HEK293 (cell line): ENCODE measurements at regions of chr7 and their contacts with region 1.

Region 1: DNA sequence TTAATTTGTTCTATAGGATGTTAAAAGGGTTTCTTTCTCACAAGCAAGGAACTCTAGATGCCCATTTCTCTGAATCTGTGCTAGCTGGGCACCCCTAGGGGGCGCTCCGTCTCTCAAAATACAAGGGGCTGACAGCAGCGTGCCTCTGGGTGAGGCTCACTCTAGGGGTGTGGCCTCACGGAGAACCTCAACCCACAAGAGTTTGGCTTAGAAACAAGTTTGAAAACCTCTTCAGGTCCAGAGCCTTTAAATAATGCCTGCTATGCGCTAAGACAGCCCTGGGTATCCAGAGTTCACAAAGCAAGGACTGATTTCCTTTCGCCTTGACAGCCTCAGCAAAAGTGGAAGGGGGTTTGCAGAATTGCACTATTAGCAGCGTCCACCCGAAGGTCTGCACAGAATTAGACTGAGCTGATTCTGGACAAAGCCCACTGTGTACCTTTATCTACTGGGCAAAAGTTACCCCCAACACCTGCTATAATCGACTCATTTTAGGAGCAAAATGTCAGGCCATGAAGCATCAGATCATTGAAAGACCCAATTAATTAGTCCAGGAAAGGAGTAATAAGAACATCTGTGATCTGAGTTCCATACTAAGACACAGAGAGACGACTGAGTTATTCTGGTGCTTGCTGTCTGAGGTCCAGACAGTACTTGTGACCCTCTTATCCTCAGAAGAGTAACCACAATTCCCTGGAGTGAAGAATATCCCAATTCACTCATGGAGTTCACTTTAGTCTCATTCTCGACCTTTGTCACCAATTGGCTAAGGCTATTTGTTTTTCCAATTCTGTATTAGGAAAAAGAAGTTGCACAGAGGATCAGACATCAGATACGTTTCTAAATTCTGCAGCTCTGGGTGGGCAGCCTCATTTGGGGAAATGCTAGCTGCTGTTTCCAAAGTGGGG is 574 bp upstream of the CPED1 start:
- H3K4me3 ChIP-seq: peak overlapping the region; percentile 38
- H3K27ac ChIP-seq: peak overlapping the region; percentile 29; the same call in 1 of the 2 replicates
- H3K4me1 ChIP-seq: peaks cover 3% of the 10 kb centered on the region; the same call in 1 of the 2 replicates
- CTCF ChIP-seq: peak; percentile 62

Region 2: DNA sequence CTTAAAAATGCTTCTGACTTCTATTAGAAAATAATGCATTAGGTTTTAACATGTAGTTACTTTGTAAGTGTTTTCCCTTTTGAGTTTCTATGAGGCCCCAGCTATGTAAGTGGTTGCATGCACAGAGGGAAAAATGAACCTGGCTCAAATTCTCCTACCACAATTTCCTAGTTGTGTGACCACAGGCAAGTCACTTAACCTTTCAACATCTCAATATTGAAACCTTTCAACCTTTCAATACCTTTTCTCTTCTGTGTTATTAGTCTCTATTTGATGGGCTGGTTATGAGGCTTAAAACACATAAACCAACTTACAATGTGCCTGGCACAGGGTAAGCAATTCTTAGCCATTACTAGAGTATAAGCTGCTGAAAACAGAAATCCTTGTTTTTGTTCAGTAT is 511.9 kb before region 1 on chr7:
- CTCF ChIA-PET with region 1: no interaction called
- POLR2A ChIA-PET with region 1: no interaction called
- H3K4me3 ChIP-seq: no peak overlapping the region
- H3K27ac ChIP-seq: no peak overlapping the region
- H3K4me1 ChIP-seq: no peaks in the 10 kb centered on the region
- CTCF ChIP-seq: no peak

Region 3: DNA sequence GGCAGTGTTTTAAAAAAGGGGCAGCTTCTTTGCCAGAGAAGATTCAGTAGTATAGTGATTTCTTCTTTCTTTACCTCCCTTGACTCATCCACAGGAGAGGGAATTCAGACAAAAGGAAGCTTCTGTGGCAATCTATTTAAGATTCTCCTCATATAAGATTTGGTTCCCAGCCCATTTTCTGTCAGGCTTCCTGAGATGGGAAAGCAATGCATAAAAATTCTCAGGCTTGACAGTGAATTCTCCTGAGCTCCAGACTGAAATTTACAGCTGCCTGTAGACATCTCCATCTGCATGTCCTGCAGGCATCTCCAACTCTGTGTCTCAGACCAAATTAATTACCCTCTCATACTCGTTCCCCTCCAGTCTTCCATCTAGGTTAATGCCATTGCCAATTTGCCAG is 202.8 kb before region 1 on chr7:
- CTCF ChIA-PET with region 1: no interaction called
- POLR2A ChIA-PET with region 1: no interaction called
- H3K4me3 ChIP-seq: no peak overlapping the region
- H3K27ac ChIP-seq: no peak overlapping the region
- H3K4me1 ChIP-seq: no peaks in the 10 kb centered on the region
- CTCF ChIP-seq: no peak

Region 4: DNA sequence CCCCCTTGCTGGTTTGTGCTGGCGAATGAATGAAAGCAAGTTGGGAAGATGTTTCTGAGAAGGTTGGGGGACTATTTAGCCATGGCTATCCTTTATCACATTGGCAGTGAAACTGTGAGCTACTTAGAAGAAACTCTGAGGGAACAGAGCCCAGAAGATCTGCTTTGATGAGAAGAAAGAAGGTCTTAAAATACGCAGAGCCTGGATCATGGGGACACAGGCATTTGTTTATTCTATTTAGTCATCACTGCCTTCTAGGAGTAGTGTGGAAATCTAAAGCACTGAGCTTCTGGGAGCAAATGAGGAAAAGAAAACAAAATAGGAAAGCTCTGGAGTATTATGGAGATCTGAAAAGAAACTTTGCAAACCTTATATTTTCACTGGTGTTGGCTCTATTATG is 29.0 kb after region 1 on chr7:
- CTCF ChIA-PET with region 1: interaction called, 10 read pairs
- POLR2A ChIA-PET with region 1: no interaction called
- H3K4me3 ChIP-seq: no peak overlapping the region
- H3K27ac ChIP-seq: no peak overlapping the region
- H3K4me1 ChIP-seq: peaks cover 14% of the 10 kb centered on the region
- CTCF ChIP-seq: no peak

Region 5: DNA sequence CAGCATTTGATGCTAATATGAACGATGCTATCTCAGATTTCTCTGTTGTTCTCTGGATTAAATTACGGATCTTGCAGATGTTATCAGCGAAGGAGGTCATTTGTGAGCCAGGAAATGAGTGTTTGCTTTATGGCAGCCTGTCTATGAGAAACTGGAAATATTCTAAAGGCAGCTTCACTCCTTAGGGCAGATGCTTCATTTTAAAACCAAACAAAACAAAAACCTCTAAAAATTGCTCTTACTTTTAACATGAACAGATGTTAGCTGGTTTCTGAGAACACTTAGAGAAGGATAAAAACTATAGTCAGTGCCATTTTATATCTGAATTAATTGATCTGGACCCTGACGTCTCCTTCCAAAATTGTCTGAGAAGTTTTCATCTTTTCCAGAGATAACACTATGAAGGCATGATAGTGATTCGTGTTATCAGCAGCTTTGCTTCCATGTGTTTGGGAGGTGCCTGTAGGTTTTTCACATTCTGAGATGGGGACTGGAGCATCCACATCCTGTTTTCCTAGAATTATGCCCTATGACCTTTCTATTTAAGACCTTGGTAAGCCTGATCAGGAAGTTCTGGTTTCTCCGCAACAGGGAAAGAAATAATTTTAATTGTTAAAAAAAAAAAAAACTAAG is 53.7 kb after region 1 on chr7:
- CTCF ChIA-PET with region 1: interaction called, 13 read pairs
- POLR2A ChIA-PET with region 1: no interaction called
- H3K4me3 ChIP-seq: no peak overlapping the region
- H3K27ac ChIP-seq: peak overlapping the region; percentile 4; the same call in 1 of the 2 replicates
- H3K4me1 ChIP-seq: peaks cover 19% of the 10 kb centered on the region; the same call in 1 of the 2 replicates
- CTCF ChIP-seq: no peak

Region 6: DNA sequence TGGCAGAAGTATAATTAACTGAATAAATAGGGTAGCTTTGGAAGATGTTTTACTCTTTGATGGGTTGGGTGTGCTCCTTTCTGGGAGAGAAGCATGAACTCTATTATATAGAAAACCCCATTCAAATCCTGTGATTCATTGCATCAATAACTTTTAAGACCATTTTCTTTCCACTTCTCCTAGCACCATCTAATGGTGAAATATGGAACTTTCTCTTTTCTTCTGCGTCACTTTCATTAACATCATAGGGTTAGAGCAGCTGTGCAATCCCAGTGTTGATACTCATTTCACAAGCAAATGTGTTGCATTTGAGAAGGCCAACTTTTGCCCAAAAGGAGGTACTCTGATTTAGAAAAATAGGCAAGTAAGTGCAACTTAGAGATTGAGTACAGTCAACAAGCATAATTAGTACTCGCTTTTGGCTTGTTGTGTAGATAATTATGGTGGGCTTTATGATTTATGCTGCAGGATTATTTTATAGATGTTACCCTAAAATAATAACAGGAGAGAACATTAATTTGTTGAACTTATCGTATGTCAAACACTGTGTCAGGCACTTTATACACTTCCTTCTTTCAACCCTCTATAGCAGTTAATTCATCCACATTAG is 93.5 kb after region 1 on chr7:
- CTCF ChIA-PET with region 1: interaction called, 152 read pairs
- POLR2A ChIA-PET with region 1: interaction called, 3 read pairs
- H3K4me3 ChIP-seq: no peak overlapping the region
- H3K27ac ChIP-seq: no peak overlapping the region
- H3K4me1 ChIP-seq: no peaks in the 10 kb centered on the region
- CTCF ChIP-seq: 0 out of 2 replicates have a peak, but pooled peaks have one; percentile 60

Region 7: GRCh38 chr7:121099572-121099971 is 111.6 kb after region 1 on chr7:
- CTCF ChIA-PET with region 1: interaction called, 18 read pairs
- POLR2A ChIA-PET with region 1: no interaction called
- H3K4me3 ChIP-seq: no peak overlapping the region
- H3K27ac ChIP-seq: no peak overlapping the region
- H3K4me1 ChIP-seq: peaks cover 6% of the 10 kb centered on the region
- CTCF ChIP-seq: no peak

Region 8: GRCh38 chr7:121107923-121108498 is 120.1 kb after region 1 on chr7:
- CTCF ChIA-PET with region 1: interaction called, 25 read pairs
- POLR2A ChIA-PET with region 1: no interaction called
- H3K4me3 ChIP-seq: no peak overlapping the region
- H3K27ac ChIP-seq: no peak overlapping the region
- H3K4me1 ChIP-seq: peaks cover 2% of the 10 kb centered on the region
- CTCF ChIP-seq: no peak

Region 9: DNA sequence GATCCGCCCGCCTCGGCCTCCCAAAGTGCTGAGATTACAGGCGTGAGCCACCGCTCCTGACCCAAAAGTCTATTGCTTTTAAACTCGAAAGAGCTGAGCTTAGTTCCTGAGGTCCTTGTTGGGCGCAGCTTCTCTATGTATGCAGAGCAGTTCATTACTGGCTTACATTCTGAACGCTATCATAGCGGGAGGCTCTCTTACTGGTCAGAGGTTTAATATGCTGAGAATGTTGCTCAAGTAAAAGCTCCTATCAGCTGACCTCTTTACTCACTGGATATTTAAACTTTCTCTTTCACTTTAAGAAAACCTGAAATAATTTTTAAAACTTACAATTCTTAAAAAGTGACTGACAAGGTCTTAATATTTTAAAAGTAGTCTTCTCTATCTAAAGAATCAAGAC is 180.0 kb after region 1 on chr7:
- CTCF ChIA-PET with region 1: no interaction called
- POLR2A ChIA-PET with region 1: no interaction called
- H3K4me3 ChIP-seq: no peak overlapping the region
- H3K27ac ChIP-seq: no peak overlapping the region
- H3K4me1 ChIP-seq: no peaks in the 10 kb centered on the region
- CTCF ChIP-seq: no peak